ENCODE measurements at regions of chr15 and their contacts with region 1.

Region 1: GRCh38 chr15:90886041-90886614 is 1.8 kb downstream of the FES start:
- DNase-seq: peak; percentile 79 to 90 (median 86)
- H3K4me3 ChIP-seq: peak overlapping the region in 5 of 7 experiments; percentile 70 to 86 (median 83)
- H3K27ac ChIP-seq: no peak overlapping the region
- H3K4me1 ChIP-seq: peaks cover 0 to 44% (median 40%) of the 10 kb centered on the region in 4 experiments
- H3K27me3 ChIP-seq: no peaks in the 10 kb centered on the region

Region 2: GRCh38 chr15:90648137-90649070 is 237.7 kb before region 1 on chr15:
- CTCF ChIA-PET with region 1: interaction called, 35 read pairs
- POLR2A ChIA-PET with region 1: interaction called, 3 read pairs
- DNase-seq: peak; percentile 77 to 86 (median 81)
- H3K4me3 ChIP-seq: peak overlapping the region in 2 of 7 experiments; percentile 13 to 48
- H3K27ac ChIP-seq: peak overlapping the region in 1 of 2 experiments; percentile 69
- H3K4me1 ChIP-seq: peaks cover 14 to 36% (median 30%) of the 10 kb centered on the region in 4 experiments
- H3K27me3 ChIP-seq: no peaks in the 10 kb centered on the region

Region 3: GRCh38 chr15:90716976-90717821 is 168.9 kb before region 1 on chr15 and contains the start of gene BLM:
- CTCF ChIA-PET with region 1: interaction called, 14 read pairs
- POLR2A ChIA-PET with region 1: interaction called, 3 read pairs
- DNase-seq: peak; percentile 98 to 99 (median 99)
- H3K4me3 ChIP-seq: peak within 1 kb of the TSS; percentile 75 to 96 (median 91)
- H3K27ac ChIP-seq: peak within 1 kb of the TSS; percentile 70 to 88
- H3K4me1 ChIP-seq: peaks cover 11 to 19% (median 13%) of the 10 kb centered on the region in 4 experiments
- H3K27me3 ChIP-seq: no peaks in the 10 kb centered on the region

Region 4: DNA sequence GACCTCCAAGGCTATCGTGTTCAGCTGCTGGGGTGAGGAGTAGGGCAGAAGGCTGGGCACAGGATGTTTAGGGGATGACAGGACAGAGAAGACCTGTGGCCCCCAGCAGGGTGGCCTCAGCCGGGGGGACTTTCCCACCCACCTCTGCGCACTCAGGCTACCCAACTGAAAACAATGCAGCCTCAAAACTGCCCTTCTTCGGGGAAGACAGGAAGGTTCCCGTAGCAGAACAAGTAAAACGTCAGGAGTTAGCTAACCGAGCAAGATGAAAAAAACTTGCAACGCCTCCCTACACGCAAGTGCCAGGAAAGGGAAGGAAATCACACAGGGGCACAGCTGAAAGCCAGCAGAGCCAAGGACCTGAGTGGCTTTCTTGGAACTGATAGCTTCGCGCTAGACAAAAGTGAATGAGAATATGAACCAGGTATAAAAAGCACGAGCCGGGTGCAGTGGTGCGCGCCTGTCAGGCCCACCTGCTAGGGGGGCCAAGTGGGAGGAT is 56.1 kb before region 1 on chr15:
- CTCF ChIA-PET with region 1: interaction called, 13 read pairs
- POLR2A ChIA-PET with region 1: interaction called, 9 read pairs
- DNase-seq: peak; percentile 83 to 90 (median 87)
- H3K4me3 ChIP-seq: peak overlapping the region in 4 of 7 experiments; percentile 15 to 52 (median 48)
- H3K27ac ChIP-seq: peak overlapping the region; percentile 55 to 75
- H3K4me1 ChIP-seq: peaks cover 11 to 38% (median 24%) of the 10 kb centered on the region in 4 experiments
- H3K27me3 ChIP-seq: no peaks in the 10 kb centered on the region

Region 5: GRCh38 chr15:90869601-90870353 is 16.4 kb before region 1 on chr15:
- CTCF ChIA-PET with region 1: interaction called, 16 read pairs
- POLR2A ChIA-PET with region 1: interaction called, 5 read pairs
- DNase-seq: peak; percentile 68 to 83 (median 71)
- H3K4me3 ChIP-seq: peak overlapping the region in 4 of 7 experiments; percentile 6 to 90 (median 80)
- H3K27ac ChIP-seq: peak overlapping the region in 1 of 2 experiments; percentile 89
- H3K4me1 ChIP-seq: peaks cover 15 to 59% (median 49%) of the 10 kb centered on the region in 4 experiments
- H3K27me3 ChIP-seq: no peaks in the 10 kb centered on the region

Region 6: GRCh38 chr15:90931737-90932659 is 45.9 kb after region 1 on chr15 and contains the start of gene HDDC3:
- CTCF ChIA-PET with region 1: interaction called, 13 read pairs
- POLR2A ChIA-PET with region 1: no interaction called
- DNase-seq: peak; percentile 90 to 93 (median 91)
- H3K4me3 ChIP-seq: peak within 1 kb of the TSS; percentile 55 to 91 (median 87)
- H3K27ac ChIP-seq: peak within 1 kb of the TSS; percentile 36 to 89
- H3K4me1 ChIP-seq: peaks cover 20 to 72% (median 60%) of the 10 kb centered on the region in 4 experiments
- H3K27me3 ChIP-seq: no peaks in the 10 kb centered on the region

Region 7: DNA sequence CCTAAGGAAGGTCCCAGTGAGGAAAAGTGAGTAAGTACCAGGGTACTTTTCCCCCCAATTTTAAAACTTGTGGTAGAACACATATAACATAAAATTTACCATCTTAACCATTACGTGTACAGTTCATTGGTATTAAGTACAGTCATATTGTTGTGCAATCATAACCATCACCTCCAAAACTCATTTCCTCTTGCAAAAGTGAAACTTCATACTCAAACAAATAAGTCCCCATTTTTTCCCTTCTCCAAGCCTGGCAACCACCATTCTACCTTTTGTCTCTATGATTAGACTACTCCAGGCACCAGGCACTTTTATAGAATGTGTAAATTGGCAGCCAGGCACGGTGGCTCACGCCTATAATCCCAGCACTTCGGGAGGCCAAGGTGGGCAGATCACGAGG is 96.0 kb after region 1 on chr15:
- CTCF ChIA-PET with region 1: no interaction called
- POLR2A ChIA-PET with region 1: no interaction called
- DNase-seq: peak in 2 of 3 donors; percentile 48 to 56
- H3K4me3 ChIP-seq: no peak overlapping the region
- H3K27ac ChIP-seq: no peak overlapping the region
- H3K4me1 ChIP-seq: peaks cover 0 to 7% (median 4%) of the 10 kb centered on the region in 4 experiments
- H3K27me3 ChIP-seq: no peaks in the 10 kb centered on the region

Measured in common myeloid progenitor, CD34-positive (primary cell).